ENCODE measurements at regions of chr12 and their contacts with region 1.

Region 1: GRCh38 chr12:104177663-104178501 is 37.7 kb upstream of the TXNRD1 start:
- DNase-seq: peak; percentile 97
- ATAC-seq: peak; percentile 82
- H3K4me3 ChIP-seq: no peak overlapping the region
- H3K27ac ChIP-seq: peak overlapping the region; percentile 72
- H3K4me1 ChIP-seq: peaks cover 22% of the 10 kb centered on the region
- H3K27me3 ChIP-seq: no peaks in the 10 kb centered on the region
- CTCF ChIP-seq: peak; percentile 65
- POLR2A ChIP-seq: no peak
- RAD21 ChIP-seq: peak; percentile 63

Region 2: GRCh38 chr12:104057771-104058197 is 120.1 kb before region 1 on chr12:
- CTCF ChIA-PET with region 1: no interaction called
- POLR2A ChIA-PET with region 1: no interaction called
- dilution Hi-C with region 1: no loop called
- in situ Hi-C with region 1: no loop called
- intact Hi-C with region 1: loop called (anchors 10 kb)
- DNase-seq: peak; percentile 37
- ATAC-seq: peak; percentile 63
- H3K4me3 ChIP-seq: no peak overlapping the region
- H3K27ac ChIP-seq: no peak overlapping the region
- H3K4me1 ChIP-seq: peaks cover 7% of the 10 kb centered on the region
- H3K27me3 ChIP-seq: no peaks in the 10 kb centered on the region
- CTCF ChIP-seq: peak; percentile 81
- POLR2A ChIP-seq: no peak
- RAD21 ChIP-seq: peak; percentile 82

Region 3: GRCh38 chr12:104399740-104400612 is 222.1 kb after region 1 on chr12:
- CTCF ChIA-PET with region 1: no interaction called
- POLR2A ChIA-PET with region 1: no interaction called
- dilution Hi-C with region 1: no loop called
- in situ Hi-C with region 1: no loop called
- intact Hi-C with region 1: no loop called
- DNase-seq: no peak
- ATAC-seq: no peak
- H3K4me3 ChIP-seq: no peak overlapping the region
- H3K27ac ChIP-seq: no peak overlapping the region
- H3K4me1 ChIP-seq: no peaks in the 10 kb centered on the region
- H3K27me3 ChIP-seq: no peaks in the 10 kb centered on the region
- CTCF ChIP-seq: no peak
- POLR2A ChIP-seq: no peak
- RAD21 ChIP-seq: no peak

Region 4: GRCh38 chr12:105053116-105053572 is 875.3 kb after region 1 on chr12:
- CTCF ChIA-PET with region 1: no interaction called
- POLR2A ChIA-PET with region 1: no interaction called
- dilution Hi-C with region 1: no loop called
- in situ Hi-C with region 1: loop called (anchors 25 kb)
- intact Hi-C with region 1: no loop called
- DNase-seq: peak; percentile 79
- ATAC-seq: peak; percentile 95
- H3K4me3 ChIP-seq: no peak overlapping the region
- H3K27ac ChIP-seq: no peak overlapping the region
- H3K4me1 ChIP-seq: no peaks in the 10 kb centered on the region
- H3K27me3 ChIP-seq: no peaks in the 10 kb centered on the region
- CTCF ChIP-seq: peak; percentile 87
- POLR2A ChIP-seq: no peak
- RAD21 ChIP-seq: peak; percentile 81

Measured in IMR-90 (cell line).